Mammary epithelial cell (primary cell): ENCODE measurements at regions of chr1 and their contacts with region 1.

Region 1: DNA sequence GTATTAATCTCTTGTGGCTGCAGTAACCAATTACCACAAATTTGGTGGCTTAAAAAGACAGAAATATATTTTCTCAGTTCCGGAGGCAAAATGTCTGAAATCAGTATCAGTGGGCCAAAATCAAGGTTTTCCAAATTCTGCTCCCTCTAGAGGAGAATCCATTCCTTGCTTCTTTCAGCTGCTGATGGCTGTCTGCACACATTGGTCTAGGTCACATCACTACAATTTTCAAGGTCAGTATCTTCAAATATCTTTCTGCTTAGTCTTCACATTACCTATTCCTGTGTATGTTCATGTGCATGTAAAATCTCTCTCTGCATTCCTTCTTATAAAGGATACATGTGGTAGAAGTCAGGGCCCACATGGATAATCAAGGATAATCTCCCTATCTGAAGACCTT is 999.4 kb downstream of the KCNT2 start:
- DNase-seq: no peak
- H3K4me3 ChIP-seq: no peak overlapping the region
- H3K27ac ChIP-seq: no peak overlapping the region
- H3K4me1 ChIP-seq: no peaks in the 10 kb centered on the region
- H3K27me3 ChIP-seq: no peaks in the 10 kb centered on the region
- CTCF ChIP-seq: peak; percentile 14 to 39

Region 2: DNA sequence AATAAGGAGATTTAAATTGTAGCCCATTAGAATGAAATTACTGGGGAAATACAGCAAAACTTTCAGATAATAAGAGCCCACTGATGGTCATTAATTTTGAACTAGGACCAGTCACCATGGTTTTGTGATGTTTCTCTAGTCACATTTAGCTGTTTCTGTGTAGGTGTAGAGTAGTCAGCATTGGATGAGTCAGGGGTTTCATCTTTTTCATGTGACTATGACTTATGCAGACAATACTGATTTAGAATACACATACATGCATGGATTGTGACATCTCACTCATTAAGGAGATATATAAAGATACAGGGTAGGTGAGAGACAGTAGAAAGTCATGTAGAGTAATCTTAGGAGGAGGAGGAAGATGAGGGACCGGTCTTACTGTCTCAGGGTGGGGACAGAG is 193.3 kb before region 1 on chr1:
- CTCF ChIA-PET with region 1: no interaction called
- dilution Hi-C with region 1: no loop called
- in situ Hi-C with region 1: no loop called
- intact Hi-C with region 1: no loop called
- DNase-seq: peak; percentile 8
- H3K4me3 ChIP-seq: no peak overlapping the region
- H3K27ac ChIP-seq: no peak overlapping the region
- H3K4me1 ChIP-seq: no peaks in the 10 kb centered on the region
- H3K27me3 ChIP-seq: no peaks in the 10 kb centered on the region
- CTCF ChIP-seq: no peak

Region 3: DNA sequence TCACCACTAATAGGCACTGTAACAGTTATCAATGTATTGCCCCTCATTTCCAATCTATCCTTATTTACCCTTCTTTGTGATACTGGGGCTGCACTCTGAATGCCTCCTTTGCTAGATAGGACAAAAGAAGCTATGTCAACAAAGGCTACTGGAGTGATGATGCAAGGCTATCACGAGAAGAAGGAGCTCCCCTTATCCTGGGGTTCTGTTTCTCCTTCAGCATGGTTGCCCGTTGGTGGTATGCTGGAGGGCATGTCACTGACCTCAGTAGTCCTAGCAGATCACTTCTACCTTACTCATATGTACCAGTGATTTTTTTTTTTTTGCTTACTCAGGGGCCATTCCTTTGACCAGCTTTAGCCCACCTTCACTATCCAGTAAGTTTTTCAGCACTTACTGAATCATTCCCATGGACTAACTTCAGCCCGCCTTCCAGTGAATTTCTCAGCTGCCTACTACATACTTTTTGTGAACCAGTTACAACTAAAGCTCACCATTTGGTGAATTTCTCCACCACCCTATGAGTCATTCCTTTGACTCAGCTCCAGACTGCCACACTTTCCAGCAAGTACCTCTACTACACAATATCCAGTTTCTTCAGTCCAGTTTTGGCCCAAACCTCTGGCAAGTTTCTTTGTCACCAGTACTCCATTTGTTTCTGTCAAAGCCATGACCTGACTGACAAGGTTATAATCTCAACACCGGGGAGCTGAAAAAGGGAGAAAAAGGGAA is 54.8 kb after region 1 on chr1:
- CTCF ChIA-PET with region 1: no interaction called
- dilution Hi-C with region 1: no loop called
- in situ Hi-C with region 1: no loop called
- intact Hi-C with region 1: loop called (anchors 10 kb)
- DNase-seq: peak; percentile 79
- H3K4me3 ChIP-seq: no peak overlapping the region
- H3K27ac ChIP-seq: no peak overlapping the region
- H3K4me1 ChIP-seq: peaks cover 13% of the 10 kb centered on the region
- H3K27me3 ChIP-seq: no peaks in the 10 kb centered on the region
- CTCF ChIP-seq: no peak